CD8-positive, alpha-beta T cell (primary cell): ENCODE measurements at regions of chr1 and their contacts with region 1.

Region 1: GRCh38 chr1:24421502-24421901 is 5.9 kb downstream of the NIPAL3 start:
- DNase-seq: no peak
- ATAC-seq: no peak
- H3K4me3 ChIP-seq: no peak overlapping the region
- H3K4me3 Mint-ChIP-seq: no peak overlapping the region
- H3K27ac ChIP-seq: no peak overlapping the region
- H3K27ac Mint-ChIP-seq: no peak overlapping the region
- H3K4me1 ChIP-seq: peaks cover 35% of the 10 kb centered on the region
- H3K4me1 Mint-ChIP-seq: peaks cover 82% of the 10 kb centered on the region
- H3K27me3 ChIP-seq: no peaks in the 10 kb centered on the region
- H3K27me3 Mint-ChIP-seq: no peaks in the 10 kb centered on the region
- CTCF ChIP-seq: no peak

Region 2: DNA sequence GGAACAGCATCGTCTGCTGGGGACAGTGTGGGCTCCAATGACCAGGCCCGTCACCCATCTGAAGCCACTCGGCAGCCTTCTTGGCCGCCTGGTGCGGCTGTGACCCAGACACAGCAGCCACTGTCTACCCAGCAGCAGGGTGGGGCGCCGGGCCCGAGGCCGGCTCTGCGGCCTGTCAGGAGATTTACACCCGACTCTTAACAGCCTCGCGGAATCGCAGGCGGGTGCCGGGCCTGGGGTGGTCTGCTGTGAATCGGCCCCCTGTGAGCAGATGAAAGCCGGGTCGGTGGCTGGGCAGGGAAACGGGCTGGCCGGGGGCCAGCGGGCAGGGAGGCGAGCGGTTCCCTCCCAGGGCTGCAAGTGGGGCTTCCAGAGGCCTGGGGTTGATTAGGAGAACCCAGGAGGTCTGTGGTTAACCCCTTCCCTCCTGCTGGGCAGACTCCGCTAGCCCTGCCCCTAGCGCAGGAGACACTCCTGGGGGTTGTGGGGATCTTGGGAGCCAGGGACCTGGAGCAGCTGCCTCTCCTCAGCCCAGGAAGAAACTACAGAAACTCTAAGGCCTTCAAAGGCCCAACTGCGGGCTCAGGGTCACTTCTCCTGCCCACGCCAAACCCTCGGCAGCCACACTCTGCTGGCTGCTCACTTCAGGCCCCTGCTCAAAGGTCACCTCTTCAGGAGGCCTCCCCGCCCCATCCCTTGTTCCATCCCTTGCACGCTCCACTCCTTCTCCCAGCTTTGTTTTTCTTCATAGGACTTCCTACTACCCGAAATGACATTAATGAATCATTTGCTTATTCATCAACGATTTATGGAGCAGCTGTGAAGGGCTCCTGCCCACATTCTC is 492.9 kb after region 1 on chr1:
- CTCF ChIA-PET with region 1: no interaction called
- POLR2A ChIA-PET with region 1: no interaction called
- intact Hi-C with region 1: loop called in 1 of 2 experiments (anchors 5 kb)
- DNase-seq: peak in 4 of 9 experiments; percentile 14 to 53 (median 34)
- ATAC-seq: no peak
- H3K4me3 ChIP-seq: peak overlapping the region in 1 of 2 experiments; percentile 1
- H3K4me3 Mint-ChIP-seq: peak overlapping the region; percentile 30
- H3K27ac ChIP-seq: peak overlapping the region; percentile 29 to 96
- H3K27ac Mint-ChIP-seq: peak overlapping the region; percentile 93
- H3K4me1 ChIP-seq: peaks cover 100% of the 10 kb centered on the region
- H3K4me1 Mint-ChIP-seq: peaks cover 82% of the 10 kb centered on the region
- H3K27me3 ChIP-seq: no peaks in the 10 kb centered on the region
- H3K27me3 Mint-ChIP-seq: no peaks in the 10 kb centered on the region
- CTCF ChIP-seq: no peak